ENCODE measurements at regions of chr14 and their contacts with region 1.

Region 1: DNA sequence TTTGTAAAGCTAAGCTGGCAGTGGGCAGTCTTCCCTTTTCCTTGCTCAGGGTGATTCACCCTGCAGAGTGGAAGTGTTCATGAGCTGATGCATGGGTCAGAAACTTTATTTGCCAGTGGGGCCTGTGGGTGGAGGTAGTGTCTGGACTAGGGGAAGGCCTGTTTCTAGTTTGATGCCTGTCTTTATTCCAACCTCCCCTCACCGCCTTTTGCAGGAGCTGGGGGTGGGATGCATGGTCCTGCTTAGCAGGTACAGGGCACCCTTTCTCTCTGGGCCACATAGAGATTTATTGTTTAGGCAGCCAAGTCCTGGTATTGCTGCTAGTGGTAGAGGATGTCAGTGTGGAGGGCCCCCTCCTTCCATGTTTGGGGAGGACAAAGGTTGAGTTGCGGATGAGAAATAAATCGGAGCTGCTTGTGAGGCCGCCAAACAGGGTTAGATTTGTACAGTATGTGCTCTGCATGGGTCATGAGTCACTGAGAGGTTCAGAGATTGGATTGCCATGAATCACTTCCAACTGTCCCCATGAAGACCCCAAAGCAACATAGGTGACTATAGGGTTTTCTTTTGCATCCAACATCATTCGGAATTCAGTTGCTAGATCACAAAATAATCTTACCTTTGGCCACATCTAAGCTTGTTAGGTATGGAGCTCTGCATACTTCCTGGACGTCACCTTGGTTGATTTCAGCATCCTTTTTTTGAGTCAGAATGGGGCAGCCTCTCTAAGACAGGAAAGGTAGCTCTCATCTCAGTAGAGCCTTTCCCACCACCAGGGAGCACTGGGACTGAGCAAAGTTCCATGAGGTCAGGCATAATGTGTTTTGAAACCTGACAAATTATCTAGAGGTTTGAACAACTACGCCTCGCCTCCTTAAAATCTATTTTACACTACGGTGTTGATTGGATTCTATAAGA is 8.8 kb downstream of the SMOC1 start:
- DNase-seq: no peak
- ATAC-seq: no peak
- H3K4me3 Mint-ChIP-seq: no peak overlapping the region
- H3K27ac Mint-ChIP-seq: no peak overlapping the region
- H3K4me1 Mint-ChIP-seq: no peaks in the 10 kb centered on the region
- H3K27me3 Mint-ChIP-seq: peaks cover 19% of the 10 kb centered on the region
- CTCF ChIP-seq: no peak

Region 2: GRCh38 chr14:69841656-69842055 is 46.3 kb before region 1 on chr14:
- CTCF ChIA-PET with region 1: no interaction called
- POLR2A ChIA-PET with region 1: no interaction called
- intact Hi-C with region 1: no loop called
- DNase-seq: no peak
- ATAC-seq: no peak
- H3K4me3 Mint-ChIP-seq: no peak overlapping the region
- H3K27ac Mint-ChIP-seq: no peak overlapping the region
- H3K4me1 Mint-ChIP-seq: no peaks in the 10 kb centered on the region
- H3K27me3 Mint-ChIP-seq: peaks cover 4% of the 10 kb centered on the region
- CTCF ChIP-seq: no peak

Region 3: DNA sequence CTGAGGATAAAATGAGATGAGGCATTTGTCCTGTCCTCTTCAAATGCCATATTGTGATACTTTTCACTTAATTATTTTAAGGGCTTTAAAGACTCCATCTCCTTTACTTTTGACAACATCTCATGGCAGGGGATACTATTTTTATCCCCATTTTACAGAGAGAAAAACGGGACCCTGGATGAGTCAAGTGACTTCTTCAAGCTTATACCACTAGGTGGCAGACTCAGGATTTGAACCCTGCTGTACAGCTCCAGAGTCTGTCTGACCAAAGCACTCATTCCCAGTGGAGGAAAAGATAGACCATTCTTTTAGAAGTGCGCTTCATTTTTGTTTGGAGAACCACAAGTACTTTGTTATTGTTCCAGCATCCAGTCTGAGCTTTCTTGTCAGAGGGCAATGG is 10.5 kb before region 1 on chr14:
- CTCF ChIA-PET with region 1: interaction called, 11 read pairs
- POLR2A ChIA-PET with region 1: interaction called, 3 read pairs
- intact Hi-C with region 1: no loop called
- DNase-seq: no peak
- ATAC-seq: no peak
- H3K4me3 Mint-ChIP-seq: no peak overlapping the region
- H3K27ac Mint-ChIP-seq: no peak overlapping the region
- H3K4me1 Mint-ChIP-seq: no peaks in the 10 kb centered on the region
- H3K27me3 Mint-ChIP-seq: peaks cover 42% of the 10 kb centered on the region
- CTCF ChIP-seq: peak; percentile 54

Measured in activated CD8-positive, alpha-beta T cell treated with anti-CD3 and anti-CD28 coated beads for 36 hours (primary cell).